WTC11 (cell line): ENCODE measurements at regions of chr17 and their contacts with region 1.

Region 1: GRCh38 chr17:81130385-81131288 is 34.7 kb upstream of the PVALEF start:
- DNase-seq: no peak
- ATAC-seq: no peak
- H3K4me3 Mint-ChIP-seq: no peak overlapping the region
- H3K27ac Mint-ChIP-seq: no peak overlapping the region
- H3K4me1 Mint-ChIP-seq: no peaks in the 10 kb centered on the region
- H3K27me3 Mint-ChIP-seq: no peaks in the 10 kb centered on the region
- CTCF ChIP-seq: no peak

Region 2: GRCh38 chr17:81015136-81015535 is 115.5 kb before region 1 on chr17:
- CTCF ChIA-PET with region 1: no interaction called
- POLR2A ChIA-PET with region 1: no interaction called
- DNase-seq: no peak
- ATAC-seq: no peak
- H3K4me3 Mint-ChIP-seq: no peak overlapping the region
- H3K27ac Mint-ChIP-seq: no peak overlapping the region
- H3K4me1 Mint-ChIP-seq: peaks cover 15% of the 10 kb centered on the region
- H3K27me3 Mint-ChIP-seq: peaks cover 14% of the 10 kb centered on the region
- CTCF ChIP-seq: no peak

Region 3: GRCh38 chr17:81090361-81091136 is 40.1 kb before region 1 on chr17:
- CTCF ChIA-PET with region 1: no interaction called
- POLR2A ChIA-PET with region 1: no interaction called
- DNase-seq: peak; percentile 77
- ATAC-seq: peak; percentile 78
- H3K4me3 Mint-ChIP-seq: no peak overlapping the region
- H3K27ac Mint-ChIP-seq: peak overlapping the region; percentile 45; the same call in 1 of the 2 replicates
- H3K4me1 Mint-ChIP-seq: peaks cover 17% of the 10 kb centered on the region
- H3K27me3 Mint-ChIP-seq: no peaks in the 10 kb centered on the region
- CTCF ChIP-seq: no peak

Region 4: DNA sequence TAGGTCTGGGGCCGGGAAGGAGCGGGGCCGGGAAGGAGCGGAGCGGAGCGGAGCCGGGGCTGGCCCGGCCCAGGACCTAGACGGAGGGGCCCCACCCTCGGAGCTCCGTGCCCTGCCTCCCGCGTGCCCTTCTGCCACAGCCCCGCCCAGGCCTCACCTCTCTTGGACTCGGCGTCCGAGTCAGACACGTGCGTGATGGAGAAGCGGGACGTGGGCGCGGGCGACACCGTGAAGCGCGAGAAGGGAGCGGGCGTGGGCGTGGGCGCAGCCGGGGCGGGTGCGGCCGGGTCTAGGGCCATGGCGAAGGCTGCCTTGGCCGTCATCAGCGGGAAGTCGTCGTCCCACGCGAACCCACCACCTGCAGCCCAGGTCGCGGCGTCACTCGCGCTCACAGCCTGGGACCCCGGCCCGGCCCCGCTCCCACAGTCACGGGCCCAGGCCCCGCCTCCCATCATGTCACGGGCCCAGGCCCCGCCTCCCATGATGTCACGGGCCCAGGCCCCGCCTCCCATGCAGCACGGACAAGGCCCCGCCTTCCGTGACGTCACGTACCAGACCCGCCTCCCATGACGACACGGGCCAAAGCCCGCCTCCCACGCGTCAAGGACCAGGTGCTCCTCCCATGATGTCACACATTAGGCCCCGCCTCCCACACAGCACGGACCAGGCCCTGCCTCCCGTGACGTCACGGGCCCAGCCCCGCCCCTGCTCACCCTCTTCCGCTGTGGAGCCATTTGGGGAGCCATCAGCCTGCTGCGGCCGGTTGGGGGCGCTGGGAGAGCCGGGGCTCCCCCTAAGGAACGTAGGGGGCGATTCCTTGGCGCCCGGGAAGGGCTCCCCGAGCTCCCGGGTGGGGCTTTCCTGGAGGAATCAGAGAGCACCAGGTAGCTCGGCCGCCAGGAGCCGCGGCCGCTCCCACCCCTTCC is 11.2 kb before region 1 on chr17:
- CTCF ChIA-PET with region 1: interaction called, 23 read pairs
- POLR2A ChIA-PET with region 1: interaction called, 4 read pairs
- DNase-seq: peak; percentile 99
- ATAC-seq: peak; percentile 71
- H3K4me3 Mint-ChIP-seq: peak overlapping the region; percentile 62
- H3K27ac Mint-ChIP-seq: no peak overlapping the region
- H3K4me1 Mint-ChIP-seq: no peaks in the 10 kb centered on the region
- H3K27me3 Mint-ChIP-seq: peaks cover 4% of the 10 kb centered on the region
- CTCF ChIP-seq: no peak; the same call in 1 of the 2 replicates

Region 5: GRCh38 chr17:81165246-81166032 is 34.8 kb after region 1 on chr17 and contains the start of gene PVALEF:
- CTCF ChIA-PET with region 1: no interaction called
- POLR2A ChIA-PET with region 1: no interaction called
- DNase-seq: peak; percentile 53
- ATAC-seq: peak; percentile 49
- H3K4me3 Mint-ChIP-seq: peak within 1 kb of the TSS; percentile 54
- H3K27ac Mint-ChIP-seq: no peak within 1 kb of the TSS
- H3K4me1 Mint-ChIP-seq: no peaks in the 10 kb centered on the region
- H3K27me3 Mint-ChIP-seq: peaks cover 9% of the 10 kb centered on the region
- CTCF ChIP-seq: no peak
- total RNA-seq, gene PVALEF: not detected in 3 replicates

Region 6: GRCh38 chr17:81248621-81249026 is 118.0 kb after region 1 on chr17:
- CTCF ChIA-PET with region 1: no interaction called
- POLR2A ChIA-PET with region 1: no interaction called
- DNase-seq: no peak
- ATAC-seq: no peak
- H3K4me3 Mint-ChIP-seq: no peak overlapping the region
- H3K27ac Mint-ChIP-seq: no peak overlapping the region
- H3K4me1 Mint-ChIP-seq: peaks cover 14% of the 10 kb centered on the region
- H3K27me3 Mint-ChIP-seq: no peaks in the 10 kb centered on the region
- CTCF ChIP-seq: no peak